ENCODE measurements at regions of chr7 and their contacts with region 1.

Region 1: GRCh38 chr7:155344600-155345433 is 47.1 kb downstream of the INSIG1 start:
- DNase-seq: peak; percentile 19 to 52
- ATAC-seq: peak; percentile 95 to 100
- H3K4me3 ChIP-seq: peak overlapping the region; percentile 8 to 61 (median 38)
- H3K27ac ChIP-seq: no peak overlapping the region
- H3K4me1 ChIP-seq: peaks cover 0 to 4% of the 10 kb centered on the region in 2 donors
- H3K27me3 ChIP-seq: peaks cover 8 to 11% (median 11%) of the 10 kb centered on the region in 3 donors
- CTCF ChIP-seq: peak; percentile 78 to 99 (median 93)
- POLR2A ChIP-seq: no peak

Region 2: DNA sequence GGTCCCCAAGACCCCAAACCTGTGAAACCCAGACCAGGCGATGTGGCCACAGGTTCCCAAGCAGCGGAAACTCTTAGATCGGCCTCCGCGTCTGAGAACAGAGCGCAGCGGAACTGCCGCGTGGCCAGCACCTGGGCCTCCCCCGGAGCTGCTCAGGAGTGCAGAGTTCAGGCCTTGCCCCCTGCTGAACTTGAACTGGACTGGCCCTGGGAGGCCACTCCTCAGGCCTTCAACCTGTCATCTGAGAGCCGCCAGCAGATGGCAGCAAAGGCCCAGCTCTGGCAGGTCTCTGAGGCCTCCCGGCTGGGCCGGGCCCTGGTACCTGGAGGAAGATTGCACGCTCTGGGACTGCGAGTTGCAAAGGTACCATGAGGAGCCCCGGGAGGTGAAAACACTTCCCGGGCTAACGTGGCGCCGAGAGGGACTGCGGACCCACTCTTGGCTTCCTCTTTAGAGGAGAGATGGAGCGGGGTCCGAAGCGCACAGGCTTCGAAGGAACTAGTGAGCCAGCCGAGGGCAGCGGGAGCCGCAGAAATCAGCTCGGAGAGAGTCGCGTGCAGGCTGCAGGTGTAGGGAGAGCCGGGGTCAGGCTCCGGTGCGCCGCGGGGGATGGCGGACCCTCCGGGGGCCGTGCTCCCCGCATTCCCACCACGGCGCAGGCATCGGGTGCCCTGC is 431.0 kb before region 1 on chr7:
- in situ Hi-C with region 1: no loop called
- intact Hi-C with region 1: loop called (anchors 5 kb)
- DNase-seq: peak; percentile 51 to 63
- ATAC-seq: peak; percentile 78 to 84
- H3K4me3 ChIP-seq: peak overlapping the region; percentile 10 to 53 (median 35)
- H3K27ac ChIP-seq: no peak overlapping the region
- H3K4me1 ChIP-seq: peaks cover 0 to 3% of the 10 kb centered on the region in 2 donors
- H3K27me3 ChIP-seq: peaks cover 0 to 2% (median 0%) of the 10 kb centered on the region in 3 donors
- CTCF ChIP-seq: peak; percentile 60 to 93 (median 83)
- POLR2A ChIP-seq: no peak

Region 3: DNA sequence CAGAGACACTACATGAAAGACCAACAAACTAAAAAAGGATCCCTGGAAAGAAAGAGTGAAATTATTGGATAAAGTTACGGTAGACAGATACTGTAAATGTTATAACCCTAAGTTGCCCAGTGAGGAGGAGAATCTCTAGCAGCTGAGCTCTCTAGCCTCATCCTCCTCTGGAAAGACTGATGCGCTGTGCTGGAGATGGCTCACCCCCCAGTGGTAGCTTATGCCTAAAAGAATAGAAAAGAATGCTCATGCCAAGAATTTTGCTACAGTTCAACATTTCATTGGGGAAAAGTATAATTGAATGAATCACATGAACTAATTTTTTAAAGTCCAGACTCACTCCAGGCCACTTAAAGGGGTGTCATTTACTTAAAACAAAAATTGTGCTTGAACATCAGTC is 1245.0 kb after region 1 on chr7:
- in situ Hi-C with region 1: no loop called
- intact Hi-C with region 1: no loop called
- DNase-seq: no peak
- ATAC-seq: no peak
- H3K4me3 ChIP-seq: no peak overlapping the region
- H3K27ac ChIP-seq: no peak overlapping the region
- H3K4me1 ChIP-seq: no peaks in the 10 kb centered on the region
- H3K27me3 ChIP-seq: no peaks in the 10 kb centered on the region
- CTCF ChIP-seq: no peak
- POLR2A ChIP-seq: no peak